Activated T-helper 2 cell treated with anti-CD3 and anti-CD28 coated beads, Interferon-gamma antibody, Interleukin-2, Interleukin-4, amounts not matched to agents 10 μg/mL and 5 μg/mL and 100 μg/mL, durations not matched to agents 14 hours and 24 hours and 36 hours (primary cell): ENCODE measurements at regions of chr5 and their contacts with region 1.

Region 1: GRCh38 chr5:81506900-81507588 is 113.1 kb upstream of the ACOT12 start:
- DNase-seq: peak; percentile 32
- H3K4me3 Mint-ChIP-seq: no peak overlapping the region
- H3K27ac Mint-ChIP-seq: no peak overlapping the region
- H3K4me1 Mint-ChIP-seq: peaks cover 11% of the 10 kb centered on the region
- H3K27me3 Mint-ChIP-seq: no peaks in the 10 kb centered on the region

Region 2: GRCh38 chr5:81425569-81425968 is 81.5 kb before region 1 on chr5:
- intact Hi-C with region 1: loop called (anchors 5 kb)
- DNase-seq: no peak
- H3K4me3 Mint-ChIP-seq: no peak overlapping the region
- H3K27ac Mint-ChIP-seq: no peak overlapping the region
- H3K4me1 Mint-ChIP-seq: peaks cover 35% of the 10 kb centered on the region
- H3K27me3 Mint-ChIP-seq: no peaks in the 10 kb centered on the region

Region 3: DNA sequence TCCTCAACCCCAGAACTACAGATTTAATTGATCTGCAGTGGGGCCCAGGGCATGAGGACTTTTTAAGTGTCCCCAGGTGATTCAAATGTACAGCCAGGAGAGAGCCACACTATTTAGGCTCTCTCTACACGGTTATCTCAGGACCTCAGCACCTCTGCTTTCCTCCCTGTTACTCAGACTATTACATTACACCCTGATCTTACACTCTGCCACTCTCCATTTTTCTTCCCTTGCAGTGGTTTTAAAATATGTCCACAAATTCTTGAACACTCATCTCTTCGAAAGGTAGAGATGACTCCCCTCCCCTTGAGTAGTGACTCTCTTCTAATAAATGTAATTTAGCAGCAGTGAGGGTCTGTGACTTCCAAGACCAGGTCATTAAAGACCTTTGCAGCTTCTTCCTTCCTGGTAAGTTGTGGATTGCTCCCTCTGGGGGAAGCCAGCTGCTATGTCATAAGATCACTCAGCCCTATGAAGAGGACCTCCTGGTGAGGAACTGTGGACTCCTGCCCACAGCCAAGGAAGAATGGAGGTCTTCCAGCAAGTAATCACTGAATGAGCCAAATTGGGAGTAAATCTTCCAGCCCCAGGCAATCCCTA is 331.4 kb after region 1 on chr5:
- intact Hi-C with region 1: loop called (anchors 5 kb)
- DNase-seq: no peak
- H3K4me3 Mint-ChIP-seq: no peak overlapping the region
- H3K27ac Mint-ChIP-seq: no peak overlapping the region
- H3K4me1 Mint-ChIP-seq: peaks cover 9% of the 10 kb centered on the region
- H3K27me3 Mint-ChIP-seq: peaks cover 12% of the 10 kb centered on the region

Region 4: DNA sequence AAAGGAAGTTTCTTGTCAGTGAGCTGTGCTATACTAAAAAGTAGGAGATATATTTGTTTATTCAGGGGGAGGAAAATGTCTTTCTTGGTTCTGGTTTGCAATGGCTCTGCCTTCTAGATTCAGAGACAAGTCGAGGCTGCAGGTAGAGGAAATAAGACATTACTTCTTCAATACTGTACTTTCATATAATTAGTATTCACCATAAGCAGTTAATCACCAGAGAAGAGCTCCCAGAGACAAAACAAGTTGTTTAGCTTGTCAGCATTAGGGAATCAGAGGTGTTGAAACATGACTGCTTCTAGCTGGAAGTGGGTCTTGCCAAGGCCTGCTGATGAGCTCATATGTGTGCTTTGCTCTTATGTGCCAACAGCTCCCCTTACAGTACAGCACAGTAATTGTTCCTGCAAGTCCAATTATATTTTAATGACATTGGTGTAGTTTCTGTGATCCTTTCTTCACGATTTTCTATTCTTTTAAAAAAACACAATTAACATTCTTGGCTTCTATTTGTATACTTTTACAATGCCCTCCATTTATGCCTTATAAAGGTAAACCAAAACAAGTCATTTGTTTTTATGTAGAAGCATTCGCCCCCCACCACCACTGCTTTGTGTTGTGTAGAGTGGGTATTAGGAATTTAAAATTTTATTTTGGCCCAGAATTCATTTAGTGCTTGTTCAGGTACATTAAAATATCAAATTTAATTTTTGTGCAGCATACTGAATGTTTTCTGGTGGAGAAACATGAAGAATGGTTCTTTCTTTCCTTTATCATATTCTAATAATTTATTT is 658.9 kb after region 1 on chr5:
- intact Hi-C with region 1: loop called (anchors 1 kb)
- DNase-seq: no peak
- H3K4me3 Mint-ChIP-seq: no peak overlapping the region
- H3K27ac Mint-ChIP-seq: no peak overlapping the region
- H3K4me1 Mint-ChIP-seq: peaks cover 7% of the 10 kb centered on the region
- H3K27me3 Mint-ChIP-seq: no peaks in the 10 kb centered on the region

Region 5: GRCh38 chr5:82356808-82357671 is 850.0 kb after region 1 on chr5:
- intact Hi-C with region 1: loop called (anchors 5 kb)
- DNase-seq: peak; percentile 70
- H3K4me3 Mint-ChIP-seq: peak overlapping the region; percentile 62
- H3K27ac Mint-ChIP-seq: peak overlapping the region; percentile 95
- H3K4me1 Mint-ChIP-seq: peaks cover 56% of the 10 kb centered on the region
- H3K27me3 Mint-ChIP-seq: no peaks in the 10 kb centered on the region